ENCODE measurements at regions of chr6 and their contacts with region 1.

Region 1: GRCh38 chr6:121944354-121944753 is 455.1 kb upstream of the HSF2 start:
- DNase-seq: no peak
- ATAC-seq: no peak
- H3K4me3 ChIP-seq: no peak overlapping the region
- H3K27ac ChIP-seq: no peak overlapping the region
- H3K4me1 ChIP-seq: no peaks in the 10 kb centered on the region
- H3K27me3 ChIP-seq: no peaks in the 10 kb centered on the region

Region 2: GRCh38 chr6:121780325-121781313 is 163.7 kb before region 1 on chr6:
- intact Hi-C with region 1: loop called in 1 of 2 experiments (anchors 10 kb)
- DNase-seq: peak; percentile 90 to 91
- ATAC-seq: peak; percentile 86
- H3K4me3 ChIP-seq: no peak overlapping the region
- H3K27ac ChIP-seq: peak overlapping the region; percentile 20 to 94
- H3K4me1 ChIP-seq: peaks cover 3 to 5% of the 10 kb centered on the region in 2 donors
- H3K27me3 ChIP-seq: no peaks in the 10 kb centered on the region

Region 3: GRCh38 chr6:122202576-122203137 is 258.3 kb after region 1 on chr6:
- intact Hi-C with region 1: no loop called
- DNase-seq: no peak
- ATAC-seq: no peak
- H3K4me3 ChIP-seq: no peak overlapping the region
- H3K27ac ChIP-seq: no peak overlapping the region
- H3K4me1 ChIP-seq: no peaks in the 10 kb centered on the region
- H3K27me3 ChIP-seq: no peaks in the 10 kb centered on the region

Measured in aorta (tissue), 5 donors.